ENCODE measurements at regions of chr1 and their contacts with region 1.

Region 1: GRCh38 chr1:119968068-119968492 is 71.8 kb upstream of the ADAM30 start:
- DNase-seq: peak; percentile 49 to 81 (median 76)
- ATAC-seq: peak; percentile 99
- H3K4me3 ChIP-seq: no peak overlapping the region
- H3K4me3 Mint-ChIP-seq: no peak overlapping the region
- H3K27ac ChIP-seq: no peak overlapping the region
- H3K27ac Mint-ChIP-seq: peak overlapping the region; percentile 76
- H3K4me1 ChIP-seq: no peaks in the 10 kb centered on the region
- H3K4me1 Mint-ChIP-seq: peaks cover 4% of the 10 kb centered on the region
- H3K27me3 ChIP-seq: no peaks in the 10 kb centered on the region
- H3K27me3 Mint-ChIP-seq: no peaks in the 10 kb centered on the region
- CTCF ChIP-seq: peak; percentile 81

Region 2: GRCh38 chr1:119917304-119918055 is 50.6 kb before region 1 on chr1:
- CTCF ChIA-PET with region 1: no interaction called
- POLR2A ChIA-PET with region 1: no interaction called
- intact Hi-C with region 1: loop called in 1 of 2 experiments (anchors 5 kb)
- DNase-seq: no peak
- ATAC-seq: no peak
- H3K4me3 ChIP-seq: no peak overlapping the region
- H3K4me3 Mint-ChIP-seq: no peak overlapping the region
- H3K27ac ChIP-seq: no peak overlapping the region
- H3K27ac Mint-ChIP-seq: peak overlapping the region; percentile 2
- H3K4me1 ChIP-seq: no peaks in the 10 kb centered on the region
- H3K4me1 Mint-ChIP-seq: no peaks in the 10 kb centered on the region
- H3K27me3 ChIP-seq: no peaks in the 10 kb centered on the region
- H3K27me3 Mint-ChIP-seq: no peaks in the 10 kb centered on the region
- CTCF ChIP-seq: no peak

Region 3: GRCh38 chr1:119981986-119982815 is 14.1 kb after region 1 on chr1:
- CTCF ChIA-PET with region 1: interaction called, 10 read pairs
- POLR2A ChIA-PET with region 1: no interaction called
- intact Hi-C with region 1: no loop called
- DNase-seq: no peak
- ATAC-seq: no peak
- H3K4me3 ChIP-seq: no peak overlapping the region
- H3K4me3 Mint-ChIP-seq: no peak overlapping the region
- H3K27ac ChIP-seq: no peak overlapping the region
- H3K27ac Mint-ChIP-seq: no peak overlapping the region
- H3K4me1 ChIP-seq: peaks cover 12% of the 10 kb centered on the region
- H3K4me1 Mint-ChIP-seq: peaks cover 20% of the 10 kb centered on the region
- H3K27me3 ChIP-seq: no peaks in the 10 kb centered on the region
- H3K27me3 Mint-ChIP-seq: no peaks in the 10 kb centered on the region
- CTCF ChIP-seq: no peak